ENCODE measurements at regions of chr16 and their contacts with region 1.

Region 1: GRCh38 chr16:8567750-8568617 is 22.3 kb downstream of the TMEM114 start:
- DNase-seq: peak; percentile 88
- ATAC-seq: peak; percentile 92
- H3K4me3 ChIP-seq: no peak overlapping the region
- H3K27ac ChIP-seq: no peak overlapping the region
- H3K4me1 ChIP-seq: peaks cover 1% of the 10 kb centered on the region
- H3K27me3 ChIP-seq: no peaks in the 10 kb centered on the region; the same call in 1 of the 2 replicates
- CTCF ChIP-seq: peak; percentile 99
- POLR2A ChIP-seq: no peak
- RAD21 ChIP-seq: peak; percentile 99

Region 2: DNA sequence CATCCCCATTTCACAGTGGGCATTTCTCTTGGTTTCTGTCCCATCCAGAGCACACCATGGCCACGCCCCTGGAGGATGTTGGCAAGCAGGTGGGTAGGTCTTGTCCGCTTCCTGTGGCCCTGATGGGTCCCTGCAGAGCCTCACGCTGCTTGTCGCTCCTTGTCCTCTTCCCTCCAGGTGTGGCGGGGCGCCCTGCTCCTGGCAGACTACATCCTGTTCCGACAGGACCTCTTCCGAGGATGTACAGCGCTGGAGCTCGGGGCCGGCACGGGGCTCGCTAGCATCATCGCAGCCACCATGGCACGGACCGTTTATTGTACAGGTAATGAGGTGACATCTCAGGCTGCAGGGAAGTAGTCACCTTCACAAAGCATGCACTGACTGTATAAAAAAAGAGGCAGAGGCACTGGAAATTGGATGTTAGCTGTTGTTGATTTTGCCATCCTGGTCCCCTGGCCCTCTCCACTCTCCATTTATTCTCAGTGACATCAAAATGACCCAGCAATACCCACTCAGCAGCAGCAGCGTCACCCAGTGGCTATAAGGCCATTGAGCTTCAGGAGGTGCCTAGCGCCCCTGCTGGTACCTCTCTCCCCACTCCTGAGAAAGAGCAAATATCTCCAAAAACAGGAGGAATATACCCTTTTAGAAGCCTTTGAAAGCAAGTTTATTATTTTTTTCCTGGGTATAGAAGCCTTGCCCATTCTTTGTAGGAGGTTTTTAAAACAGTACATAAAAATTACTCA is 67.2 kb after region 1 on chr16:
- CTCF ChIA-PET with region 1: interaction called, 3 read pairs
- POLR2A ChIA-PET with region 1: no interaction called
- dilution Hi-C with region 1: no loop called
- in situ Hi-C with region 1: no loop called
- intact Hi-C with region 1: loop called (anchors 1 kb)
- DNase-seq: peak; percentile 28
- ATAC-seq: peak; percentile 49; the same call in 1 of the 2 replicates
- H3K4me3 ChIP-seq: no peak overlapping the region
- H3K27ac ChIP-seq: no peak overlapping the region
- H3K4me1 ChIP-seq: no peaks in the 10 kb centered on the region
- H3K27me3 ChIP-seq: no peaks in the 10 kb centered on the region
- CTCF ChIP-seq: peak; percentile 83
- POLR2A ChIP-seq: no peak
- RAD21 ChIP-seq: peak; percentile 60

Region 3: GRCh38 chr16:8655184-8655717 is 87.3 kb after region 1 on chr16:
- CTCF ChIA-PET with region 1: no interaction called
- POLR2A ChIA-PET with region 1: no interaction called
- dilution Hi-C with region 1: no loop called
- in situ Hi-C with region 1: no loop called
- intact Hi-C with region 1: loop called (anchors 1 kb)
- DNase-seq: peak; percentile 35
- ATAC-seq: peak; percentile 63
- H3K4me3 ChIP-seq: no peak overlapping the region
- H3K27ac ChIP-seq: no peak overlapping the region
- H3K4me1 ChIP-seq: no peaks in the 10 kb centered on the region
- H3K27me3 ChIP-seq: peaks cover 2% of the 10 kb centered on the region; the same call in 1 of the 2 replicates
- CTCF ChIP-seq: peak; percentile 51
- POLR2A ChIP-seq: no peak
- RAD21 ChIP-seq: peak; percentile 40

Region 4: GRCh38 chr16:8885674-8886592 is 317.9 kb after region 1 on chr16:
- CTCF ChIA-PET with region 1: no interaction called
- POLR2A ChIA-PET with region 1: no interaction called
- dilution Hi-C with region 1: no loop called
- in situ Hi-C with region 1: loop called (anchors 5 kb)
- intact Hi-C with region 1: no loop called
- DNase-seq: peak; percentile 51
- ATAC-seq: peak; percentile 40
- H3K4me3 ChIP-seq: no peak overlapping the region
- H3K27ac ChIP-seq: no peak overlapping the region
- H3K4me1 ChIP-seq: peaks cover 27% of the 10 kb centered on the region
- H3K27me3 ChIP-seq: no peaks in the 10 kb centered on the region
- CTCF ChIP-seq: 0 out of 2 replicates have a peak, but pooled peaks have one; percentile 19
- POLR2A ChIP-seq: no peak
- RAD21 ChIP-seq: no peak